BJ (cell line): ENCODE measurements at regions of chr7 and their contacts with region 1.

Region 1: DNA sequence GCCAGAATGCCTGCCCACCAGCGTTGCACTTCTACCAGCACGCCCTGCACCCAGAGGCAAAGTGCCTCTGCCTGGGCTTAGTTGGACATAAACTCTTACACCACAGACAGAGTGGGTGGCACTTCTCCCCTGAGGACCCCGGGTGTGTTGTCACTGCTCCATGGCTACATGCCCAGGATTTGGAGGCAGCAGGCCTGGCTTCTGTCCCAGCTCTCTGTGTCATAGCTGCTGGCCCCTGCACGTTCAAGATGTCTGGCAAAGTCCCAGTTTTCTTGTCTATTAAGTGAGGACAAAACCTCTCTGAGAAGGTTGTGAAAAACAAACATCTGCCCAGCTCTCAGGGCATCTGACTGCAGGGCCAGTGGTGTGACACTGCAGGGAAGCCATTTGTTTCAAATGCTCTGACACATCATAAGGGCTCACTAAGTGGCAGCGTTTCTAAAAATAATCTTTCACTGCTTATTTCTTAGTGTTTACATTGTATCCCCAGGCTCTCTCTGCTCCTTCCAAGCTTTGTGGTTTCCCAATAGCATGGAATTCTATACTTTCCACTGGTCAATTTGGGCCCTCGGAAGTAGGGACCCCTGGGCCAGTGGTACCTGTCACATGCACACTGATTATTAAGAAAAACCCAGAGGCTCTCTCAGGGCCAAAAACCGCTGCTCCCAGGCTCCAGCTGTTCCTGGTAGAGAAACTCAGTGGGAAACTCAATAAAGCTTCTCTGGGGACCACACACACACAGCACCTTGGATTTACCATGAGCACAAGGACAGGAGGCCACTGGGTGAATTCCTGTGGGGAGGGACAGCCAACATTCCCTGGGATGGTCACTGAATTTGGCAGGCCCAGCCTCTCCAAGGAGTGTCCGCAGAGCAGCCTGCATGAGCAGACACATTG is 86.2 kb upstream of the ANLN start:
- DNase-seq: peak; percentile 87
- H3K4me3 ChIP-seq: no peak overlapping the region
- H3K27me3 ChIP-seq: no peaks in the 10 kb centered on the region; the same call in 1 of the 2 replicates
- CTCF ChIP-seq: no peak

Region 2: DNA sequence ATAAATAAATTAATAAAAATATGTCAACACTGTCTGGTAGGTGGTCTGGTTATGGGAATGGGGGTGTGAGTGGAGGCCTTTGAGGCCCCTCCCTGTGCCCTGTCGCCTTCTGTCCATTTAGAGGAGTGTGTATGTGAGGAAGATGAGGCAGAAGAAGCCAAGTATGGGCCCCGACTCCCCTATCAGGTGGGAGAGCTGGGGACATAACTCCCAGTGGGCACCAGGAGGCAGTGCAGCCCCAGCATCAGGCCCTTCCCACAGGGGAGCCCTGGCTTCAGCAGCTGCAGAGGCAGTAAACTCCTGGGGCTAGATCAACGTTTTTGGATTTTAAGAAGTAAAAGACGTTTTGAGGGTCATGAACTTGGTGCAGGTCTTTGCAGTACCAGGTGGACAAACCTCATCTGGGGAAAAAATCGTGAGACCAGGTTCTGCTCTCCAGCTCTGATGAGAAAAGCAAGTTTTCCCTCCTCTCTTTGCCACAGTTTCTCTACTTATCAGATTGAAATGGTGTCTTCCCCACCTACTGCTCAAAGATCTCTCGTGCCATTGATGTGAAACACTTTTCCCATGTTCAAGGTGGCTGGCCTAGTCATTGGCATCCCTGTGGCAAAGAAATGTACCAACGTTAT is 318.2 kb before region 1 on chr7:
- CTCF ChIA-PET with region 1: interaction called, 32 read pairs
- POLR2A ChIA-PET with region 1: no interaction called
- DNase-seq: no peak
- H3K4me3 ChIP-seq: no peak overlapping the region
- H3K27me3 ChIP-seq: peaks cover 3% of the 10 kb centered on the region; the same call in 1 of the 2 replicates
- CTCF ChIP-seq: peak; percentile 97

Region 3: GRCh38 chr7:37031571-37032257 is 728.3 kb after region 1 on chr7:
- CTCF ChIA-PET with region 1: no interaction called
- POLR2A ChIA-PET with region 1: no interaction called
- DNase-seq: peak; percentile 99
- H3K4me3 ChIP-seq: no peak overlapping the region
- H3K27me3 ChIP-seq: no peaks in the 10 kb centered on the region
- CTCF ChIP-seq: no peak